Pancreas (tissue), 10 donors: ENCODE measurements at regions of chr3 and their contacts with region 1.

Region 1: GRCh38 chr3:168847291-168847883 is 751.7 kb upstream of the GOLIM4 start:
- DNase-seq: peak in 1 of 6 donors; percentile 16
- ATAC-seq: peak; percentile 60 to 86 (median 80)
- H3K4me3 ChIP-seq: no peak overlapping the region
- H3K27ac ChIP-seq: no peak overlapping the region
- H3K4me1 ChIP-seq: no peaks in the 10 kb centered on the region
- H3K27me3 ChIP-seq: no peaks in the 10 kb centered on the region
- CTCF ChIP-seq: peak; percentile 40 to 56 (median 42)

Region 2: GRCh38 chr3:168220556-168220955 is 626.8 kb before region 1 on chr3:
- intact Hi-C with region 1: loop called in 1 of 3 experiments (anchors 10 kb)
- DNase-seq: no peak
- ATAC-seq: no peak
- H3K4me3 ChIP-seq: no peak overlapping the region
- H3K27ac ChIP-seq: no peak overlapping the region
- H3K4me1 ChIP-seq: no peaks in the 10 kb centered on the region
- H3K27me3 ChIP-seq: no peaks in the 10 kb centered on the region
- CTCF ChIP-seq: no peak